CD8-positive, alpha-beta memory T cell (primary cell): ENCODE measurements at regions of chr9 and their contacts with region 1.

Region 1: DNA sequence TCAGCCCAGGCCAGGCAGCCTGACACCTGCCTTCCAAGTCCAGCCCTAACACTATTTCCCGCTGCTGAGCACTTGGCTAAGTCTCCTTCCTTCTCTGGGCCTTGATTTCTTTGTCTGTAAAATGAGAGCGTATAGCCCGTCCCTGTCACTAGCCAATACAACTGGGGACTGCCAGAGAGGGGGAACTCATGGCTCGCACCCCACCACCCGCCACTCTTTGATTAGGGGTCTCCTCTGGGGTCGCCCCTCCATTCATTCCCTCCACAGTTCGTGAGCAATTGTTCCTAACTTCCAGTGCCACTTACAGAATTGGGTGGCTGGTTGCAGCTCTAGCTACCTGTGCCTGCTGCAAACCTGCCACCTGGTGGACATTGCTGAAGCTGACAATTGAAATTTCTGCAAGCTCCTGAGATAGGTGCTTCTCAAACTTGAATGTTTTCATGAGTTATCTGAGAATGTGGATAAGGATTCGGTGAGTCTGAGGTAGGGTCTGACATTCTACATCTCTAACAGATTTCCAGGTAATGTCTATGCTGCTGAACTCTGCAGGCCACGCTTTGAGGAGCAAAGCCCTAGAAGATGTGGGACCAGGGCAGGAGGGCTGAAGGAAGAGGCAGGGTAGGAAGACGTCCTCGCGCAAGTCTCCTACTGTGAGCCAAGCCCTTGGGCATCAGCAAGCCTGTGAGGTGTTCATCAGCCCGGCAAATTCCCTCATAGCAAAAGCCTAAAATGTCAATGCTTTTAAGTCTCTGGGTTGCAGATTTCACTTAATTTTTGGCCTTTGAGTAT is 13.3 kb upstream of the RECK start:
- DNase-seq: peak; percentile 30 to 70 (median 41)
- H3K4me3 ChIP-seq: no peak overlapping the region
- H3K4me3 Mint-ChIP-seq: no peak overlapping the region
- H3K27ac ChIP-seq: no peak overlapping the region
- H3K27ac Mint-ChIP-seq: peak overlapping the region in 1 of 8 donors; percentile 41
- H3K4me1 ChIP-seq: no peaks in the 10 kb centered on the region
- H3K4me1 Mint-ChIP-seq: no peaks in the 10 kb centered on the region
- H3K27me3 ChIP-seq: no peaks in the 10 kb centered on the region
- H3K27me3 Mint-ChIP-seq: peaks cover 4 to 16% of the 10 kb centered on the region in 2 donors

Region 2: GRCh38 chr9:35954942-35955546 is 68.4 kb before region 1 on chr9:
- CTCF ChIA-PET with region 1: interaction called, 12 read pairs
- POLR2A ChIA-PET with region 1: no interaction called
- DNase-seq: peak in 4 of 5 donors; percentile 12 to 57 (median 48)
- H3K4me3 ChIP-seq: no peak overlapping the region
- H3K4me3 Mint-ChIP-seq: no peak overlapping the region
- H3K27ac ChIP-seq: no peak overlapping the region
- H3K27ac Mint-ChIP-seq: peak overlapping the region in 1 of 8 donors; percentile 1
- H3K4me1 ChIP-seq: no peaks in the 10 kb centered on the region
- H3K4me1 Mint-ChIP-seq: peaks cover 3 to 5% (median 4%) of the 10 kb centered on the region in 3 donors
- H3K27me3 ChIP-seq: peaks cover 4% of the 10 kb centered on the region
- H3K27me3 Mint-ChIP-seq: peaks cover 11 to 40% of the 10 kb centered on the region in 2 donors

Region 3: GRCh38 chr9:36008774-36009300 is 14.6 kb before region 1 on chr9:
- CTCF ChIA-PET with region 1: interaction called, 12 read pairs
- POLR2A ChIA-PET with region 1: no interaction called
- DNase-seq: peak; percentile 29 to 77 (median 54)
- H3K4me3 ChIP-seq: no peak overlapping the region
- H3K4me3 Mint-ChIP-seq: no peak overlapping the region
- H3K27ac ChIP-seq: no peak overlapping the region
- H3K27ac Mint-ChIP-seq: peak overlapping the region in 1 of 8 donors; percentile 4
- H3K4me1 ChIP-seq: no peaks in the 10 kb centered on the region
- H3K4me1 Mint-ChIP-seq: peaks cover 4 to 5% (median 4%) of the 10 kb centered on the region in 3 donors
- H3K27me3 ChIP-seq: no peaks in the 10 kb centered on the region
- H3K27me3 Mint-ChIP-seq: peaks cover 27 to 44% of the 10 kb centered on the region in 2 donors

Region 4: GRCh38 chr9:36036780-36037548 is 13.5 kb after region 1 on chr9 and contains the start of gene RECK:
- CTCF ChIA-PET with region 1: interaction called, 14 read pairs
- POLR2A ChIA-PET with region 1: no interaction called
- DNase-seq: peak; percentile 77 to 86 (median 83)
- H3K4me3 ChIP-seq: peak within 1 kb of the TSS; percentile 68
- H3K4me3 Mint-ChIP-seq: peak within 1 kb of the TSS; percentile 84 to 97 (median 89)
- H3K27ac ChIP-seq: peak within 1 kb of the TSS; percentile 25
- H3K27ac Mint-ChIP-seq: peak within 1 kb of the TSS in 7 of 8 donors; percentile 21 to 94 (median 82)
- H3K4me1 ChIP-seq: peaks cover 25% of the 10 kb centered on the region
- H3K4me1 Mint-ChIP-seq: peaks cover 37 to 48% (median 45%) of the 10 kb centered on the region in 3 donors
- H3K27me3 ChIP-seq: no peaks in the 10 kb centered on the region
- H3K27me3 Mint-ChIP-seq: peaks cover 4 to 9% of the 10 kb centered on the region in 2 donors
- total RNA-seq, gene RECK: 3.7 to 4.3 TPM

Region 5: DNA sequence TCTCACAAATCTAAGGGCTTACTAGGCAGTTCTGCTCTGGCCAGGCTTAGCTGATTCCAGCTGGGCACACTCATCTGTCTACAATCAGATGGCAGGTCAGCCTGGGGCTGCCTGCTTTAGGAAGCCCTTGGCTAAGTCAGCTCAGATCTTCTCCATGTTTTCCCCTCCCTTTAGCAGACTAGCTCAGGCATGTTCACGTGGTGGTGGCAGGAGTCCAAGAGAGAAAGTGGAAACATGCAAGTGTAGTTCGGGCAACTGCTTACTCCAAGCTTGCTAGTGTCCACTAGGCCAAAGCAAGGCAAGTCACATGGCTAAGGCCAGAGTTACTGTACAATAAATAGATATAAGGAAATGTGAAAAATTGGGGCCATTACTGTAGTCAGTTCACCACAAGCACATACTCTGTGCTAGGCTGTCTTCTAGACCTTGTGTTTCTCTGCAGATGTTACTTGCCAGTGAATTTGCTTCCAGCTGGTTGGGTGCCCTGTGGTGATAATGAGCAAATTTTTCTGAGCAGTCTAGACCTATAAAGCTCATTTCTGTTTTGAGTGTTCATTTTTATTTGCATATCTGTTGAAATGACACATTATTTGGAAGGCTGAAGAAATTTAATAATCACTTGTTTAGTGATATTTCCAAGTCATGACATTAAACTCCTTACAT is 51.5 kb after region 1 on chr9:
- CTCF ChIA-PET with region 1: no interaction called
- POLR2A ChIA-PET with region 1: no interaction called
- DNase-seq: no peak
- H3K4me3 ChIP-seq: no peak overlapping the region
- H3K4me3 Mint-ChIP-seq: no peak overlapping the region
- H3K27ac ChIP-seq: no peak overlapping the region
- H3K27ac Mint-ChIP-seq: peak overlapping the region in 2 of 8 donors; percentile 23 to 57
- H3K4me1 ChIP-seq: no peaks in the 10 kb centered on the region
- H3K4me1 Mint-ChIP-seq: no peaks in the 10 kb centered on the region
- H3K27me3 ChIP-seq: no peaks in the 10 kb centered on the region
- H3K27me3 Mint-ChIP-seq: no peaks in the 10 kb centered on the region